Panc1 (cell line): ENCODE measurements at regions of chr7 and their contacts with region 1.

Region 1: GRCh38 chr7:26365077-26365900 is 73.6 kb downstream of the SNX10 start:
- DNase-seq: peak; percentile 69
- ATAC-seq: peak; percentile 84
- H3K4me3 ChIP-seq: no peak overlapping the region
- H3K27ac ChIP-seq: no peak overlapping the region
- H3K4me1 ChIP-seq: no peaks in the 10 kb centered on the region
- H3K27me3 ChIP-seq: no peaks in the 10 kb centered on the region
- CTCF ChIP-seq: peak; percentile 81

Region 2: DNA sequence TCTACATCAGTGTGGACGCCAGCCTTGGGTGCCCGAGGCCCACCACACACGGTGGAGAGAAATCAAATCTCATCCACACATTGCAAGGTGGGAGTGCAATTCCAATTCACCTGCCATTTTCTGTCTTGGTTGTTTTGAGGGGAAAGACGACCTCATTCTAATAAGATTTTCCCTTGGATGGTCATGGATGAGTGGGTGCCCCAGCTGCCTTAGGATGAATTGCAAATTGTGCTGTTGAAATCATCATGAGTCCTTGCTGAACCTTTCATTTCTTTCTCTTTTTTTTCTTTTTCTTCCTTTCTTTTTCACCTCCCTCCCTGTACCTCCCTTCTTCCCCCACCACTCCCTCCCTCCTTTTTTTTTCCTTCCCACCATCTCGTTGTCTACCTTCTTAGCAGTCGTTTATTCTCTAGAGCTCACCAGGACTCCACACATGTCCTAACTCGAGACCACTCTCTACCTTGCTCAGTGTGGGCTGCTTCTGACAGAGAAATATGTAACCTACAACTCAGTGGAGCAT is 480.2 kb before region 1 on chr7:
- CTCF ChIA-PET with region 1: interaction called, 12 read pairs
- POLR2A ChIA-PET with region 1: no interaction called
- in situ Hi-C with region 1: no loop called
- intact Hi-C with region 1: no loop called
- DNase-seq: no peak
- ATAC-seq: no peak
- H3K4me3 ChIP-seq: no peak overlapping the region
- H3K27ac ChIP-seq: no peak overlapping the region
- H3K4me1 ChIP-seq: 0 out of 2 replicates have a peak, but pooled peaks cover 4% of the 10 kb centered on the region
- H3K27me3 ChIP-seq: peaks cover 29% of the 10 kb centered on the region
- CTCF ChIP-seq: no peak

Region 3: GRCh38 chr7:26090927-26091519 is 274.3 kb before region 1 on chr7:
- CTCF ChIA-PET with region 1: no interaction called
- POLR2A ChIA-PET with region 1: no interaction called
- in situ Hi-C with region 1: no loop called
- intact Hi-C with region 1: loop called (anchors 1 kb)
- DNase-seq: peak; percentile 67
- ATAC-seq: peak; percentile 89
- H3K4me3 ChIP-seq: no peak overlapping the region
- H3K27ac ChIP-seq: peak overlapping the region; percentile 32; the same call in 1 of the 2 replicates
- H3K4me1 ChIP-seq: peaks cover 6% of the 10 kb centered on the region; the same call in 1 of the 2 replicates
- H3K27me3 ChIP-seq: no peaks in the 10 kb centered on the region
- CTCF ChIP-seq: peak; percentile 88

Region 4: GRCh38 chr7:26291699-26292538 is 73.4 kb before region 1 on chr7 and contains the start of gene SNX10:
- CTCF ChIA-PET with region 1: no interaction called
- POLR2A ChIA-PET with region 1: no interaction called
- in situ Hi-C with region 1: no loop called
- intact Hi-C with region 1: loop called (anchors 5 kb)
- DNase-seq: no peak
- ATAC-seq: peak; percentile 96
- H3K4me3 ChIP-seq: peak within 1 kb of the TSS; percentile 53 to 64
- H3K27ac ChIP-seq: peak within 1 kb of the TSS; percentile 86
- H3K4me1 ChIP-seq: peaks cover 11% of the 10 kb centered on the region
- H3K27me3 ChIP-seq: no peaks in the 10 kb centered on the region
- CTCF ChIP-seq: peak; percentile 86
- total RNA-seq, gene SNX10: 21.8 TPM

Region 5: DNA sequence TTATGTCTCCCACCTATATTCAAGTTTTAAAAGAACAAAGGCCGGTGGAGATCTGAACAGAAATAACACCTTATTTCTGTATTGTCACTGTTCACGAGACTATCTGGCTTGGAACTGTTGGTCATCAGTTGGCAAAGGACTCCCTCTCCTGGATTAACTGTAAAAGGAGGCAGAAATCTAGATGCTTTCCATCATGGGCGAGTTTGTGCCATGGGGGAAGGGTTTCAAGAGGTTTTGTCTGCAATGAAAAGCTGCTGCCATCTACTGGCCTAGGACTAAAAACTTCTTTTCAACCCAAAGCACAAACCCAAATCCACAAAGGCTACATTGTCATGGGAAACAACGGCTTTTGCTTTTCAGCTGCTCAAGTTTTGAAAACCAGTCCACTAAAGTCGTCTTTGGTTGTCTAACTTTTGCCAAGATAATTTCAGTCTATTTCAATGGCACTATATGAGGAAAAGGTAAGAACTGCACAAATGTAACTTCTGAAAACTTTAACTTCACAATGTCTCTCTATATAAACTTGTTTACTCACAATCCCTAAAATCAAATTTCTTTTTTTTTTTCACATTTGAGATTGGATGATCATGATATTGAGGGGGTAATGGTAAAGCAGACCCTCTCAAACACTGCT is 302.3 kb after region 1 on chr7:
- CTCF ChIA-PET with region 1: interaction called, 39 read pairs
- POLR2A ChIA-PET with region 1: no interaction called
- in situ Hi-C with region 1: no loop called
- intact Hi-C with region 1: loop called (anchors 1 kb)
- DNase-seq: peak; percentile 80
- ATAC-seq: peak; percentile 98
- H3K4me3 ChIP-seq: no peak overlapping the region
- H3K27ac ChIP-seq: no peak overlapping the region
- H3K4me1 ChIP-seq: peaks cover 4% of the 10 kb centered on the region
- H3K27me3 ChIP-seq: no peaks in the 10 kb centered on the region
- CTCF ChIP-seq: peak; percentile 97